ENCODE measurements at regions of chr9 and their contacts with region 1.

Region 1: DNA sequence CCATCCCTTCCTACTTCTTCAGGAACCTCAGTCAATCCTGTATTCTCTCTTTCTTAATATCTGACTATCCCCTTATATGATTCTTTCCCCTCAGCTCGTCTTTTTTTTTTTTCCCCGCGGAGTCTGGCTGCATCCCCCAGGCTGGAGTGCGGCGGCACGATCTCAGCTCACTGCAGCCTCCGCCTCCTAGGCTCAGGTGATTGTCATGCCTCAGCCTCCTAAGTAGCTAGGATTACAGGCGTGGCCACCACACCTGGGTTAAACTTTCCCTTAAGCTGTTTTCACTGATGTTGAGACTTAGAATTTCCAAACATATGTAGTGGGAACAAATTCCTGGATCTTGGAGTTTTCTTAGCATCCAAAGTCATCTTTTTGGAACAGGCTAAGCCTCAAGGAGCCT is 13.3 kb upstream of the RUSC2 start:
- DNase-seq: no peak
- H3K4me3 ChIP-seq: no peak overlapping the region
- H3K27ac ChIP-seq: no peak overlapping the region
- H3K27me3 ChIP-seq: no peaks in the 10 kb centered on the region
- CTCF ChIP-seq: no peak

Region 2: DNA sequence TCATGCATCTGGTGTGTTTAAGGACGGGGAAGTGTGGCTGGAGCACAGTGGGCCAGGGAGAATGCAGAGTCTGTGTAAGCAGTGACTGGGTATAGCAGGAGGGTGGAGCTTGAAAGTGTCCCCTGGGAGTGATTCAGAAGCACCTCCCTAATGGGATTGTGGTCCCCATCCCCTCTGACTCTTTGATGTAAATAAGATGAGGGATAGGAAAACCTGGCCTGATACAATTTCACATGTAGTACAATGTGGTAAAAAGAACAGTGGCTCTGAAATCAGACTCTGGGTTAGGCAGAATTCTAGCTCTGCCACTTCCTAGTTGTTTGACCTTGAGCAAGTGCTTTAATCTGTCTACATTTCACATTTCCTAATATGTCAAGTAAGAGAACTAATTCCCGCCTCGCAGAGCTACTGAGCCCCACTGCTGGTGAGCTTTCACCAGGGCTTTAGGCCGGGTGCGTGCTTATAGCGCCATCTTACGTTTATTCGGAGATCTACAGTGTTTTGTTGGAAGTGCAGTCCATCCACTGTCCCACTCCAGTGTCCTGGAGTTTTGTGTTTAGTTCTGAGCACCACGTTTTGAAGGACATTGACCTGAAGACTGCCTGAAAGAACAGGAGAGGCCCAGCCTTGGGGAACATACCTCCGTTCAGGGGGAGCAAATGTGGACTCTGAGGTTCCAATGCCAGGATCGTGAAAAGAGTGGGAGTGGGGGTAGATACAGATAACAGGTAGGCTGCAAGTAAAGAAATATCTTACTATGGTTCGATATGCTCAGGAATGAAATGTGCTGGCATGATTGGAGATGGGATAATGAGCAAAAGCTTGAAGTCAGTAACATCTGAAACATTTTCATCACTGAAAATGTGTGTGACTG is 77.3 kb after region 1 on chr9:
- in situ Hi-C with region 1: loop called (anchors 5 kb)
- DNase-seq: peak; percentile 69
- H3K4me3 ChIP-seq: no peak overlapping the region
- H3K27ac ChIP-seq: no peak overlapping the region
- H3K27me3 ChIP-seq: no peaks in the 10 kb centered on the region
- CTCF ChIP-seq: peak; percentile 89

Measured in brain microvascular endothelial cell (primary cell).